ENCODE measurements at regions of chr3 and their contacts with region 1.

Region 1: DNA sequence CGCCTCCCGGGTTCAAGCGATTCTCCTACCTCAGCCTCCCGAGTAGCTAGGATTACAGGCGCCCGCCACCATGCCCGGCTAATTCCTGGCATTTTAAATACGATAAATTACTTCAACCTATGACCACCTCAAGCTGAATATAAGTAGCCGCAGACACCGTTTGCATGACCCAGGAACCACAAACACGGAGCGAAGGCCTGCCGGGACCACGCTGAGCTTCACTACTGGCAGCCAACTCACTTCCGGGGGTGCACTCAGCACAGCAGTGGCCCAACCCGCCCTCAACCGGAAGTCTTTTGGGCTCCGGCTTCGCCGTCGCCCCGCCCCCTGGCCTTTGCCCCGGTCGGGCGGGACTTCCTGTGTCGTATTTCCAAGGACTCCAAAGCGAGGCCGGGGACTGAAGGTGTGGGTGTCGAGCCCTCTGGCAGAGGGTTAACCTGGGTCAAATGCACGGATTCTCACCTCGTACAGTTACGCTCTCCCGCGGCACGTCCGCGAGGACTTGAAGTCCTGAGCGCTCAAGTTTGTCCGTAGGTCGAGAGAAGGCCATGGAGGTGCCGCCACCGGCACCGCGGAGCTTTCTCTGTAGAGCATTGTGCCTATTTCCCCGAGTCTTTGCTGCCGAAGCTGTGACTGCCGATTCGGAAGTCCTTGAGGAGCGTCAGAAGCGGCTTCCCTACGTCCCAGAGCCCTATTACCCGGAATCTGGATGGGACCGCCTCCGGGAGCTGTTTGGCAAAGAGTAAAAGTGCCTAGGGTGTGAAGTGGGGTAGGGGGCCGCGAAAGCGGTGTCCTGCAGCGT is at the start of gene TIMMDC1:
- DNase-seq: peak; percentile 96
- H3K4me3 Mint-ChIP-seq: peak within 1 kb of the TSS; percentile 96
- H3K27ac Mint-ChIP-seq: peak within 1 kb of the TSS; percentile 95
- H3K4me1 Mint-ChIP-seq: peaks cover 32% of the 10 kb centered on the region
- H3K27me3 Mint-ChIP-seq: no peaks in the 10 kb centered on the region
- total RNA-seq, gene TIMMDC1: 93.6 and 101 TPM in 2 replicates

Region 2: GRCh38 chr3:118977671-118978392 is 520.6 kb before region 1 on chr3:
- intact Hi-C with region 1: no loop called
- DNase-seq: no peak
- H3K4me3 Mint-ChIP-seq: no peak overlapping the region
- H3K27ac Mint-ChIP-seq: no peak overlapping the region
- H3K4me1 Mint-ChIP-seq: peaks cover 7% of the 10 kb centered on the region
- H3K27me3 Mint-ChIP-seq: peaks cover 9% of the 10 kb centered on the region

Region 3: GRCh38 chr3:119194237-119195150 is 303.9 kb before region 1 on chr3:
- intact Hi-C with region 1: no loop called
- DNase-seq: no peak
- H3K4me3 Mint-ChIP-seq: no peak overlapping the region
- H3K27ac Mint-ChIP-seq: no peak overlapping the region
- H3K4me1 Mint-ChIP-seq: no peaks in the 10 kb centered on the region
- H3K27me3 Mint-ChIP-seq: peaks cover 5% of the 10 kb centered on the region

Region 4: GRCh38 chr3:119322835-119323722 is 175.3 kb before region 1 on chr3:
- intact Hi-C with region 1: loop called (anchors 1 kb)
- DNase-seq: peak; percentile 87
- H3K4me3 Mint-ChIP-seq: peak overlapping the region; percentile 77
- H3K27ac Mint-ChIP-seq: peak overlapping the region; percentile 83
- H3K4me1 Mint-ChIP-seq: peaks cover 47% of the 10 kb centered on the region
- H3K27me3 Mint-ChIP-seq: peaks cover 2% of the 10 kb centered on the region

Region 5: DNA sequence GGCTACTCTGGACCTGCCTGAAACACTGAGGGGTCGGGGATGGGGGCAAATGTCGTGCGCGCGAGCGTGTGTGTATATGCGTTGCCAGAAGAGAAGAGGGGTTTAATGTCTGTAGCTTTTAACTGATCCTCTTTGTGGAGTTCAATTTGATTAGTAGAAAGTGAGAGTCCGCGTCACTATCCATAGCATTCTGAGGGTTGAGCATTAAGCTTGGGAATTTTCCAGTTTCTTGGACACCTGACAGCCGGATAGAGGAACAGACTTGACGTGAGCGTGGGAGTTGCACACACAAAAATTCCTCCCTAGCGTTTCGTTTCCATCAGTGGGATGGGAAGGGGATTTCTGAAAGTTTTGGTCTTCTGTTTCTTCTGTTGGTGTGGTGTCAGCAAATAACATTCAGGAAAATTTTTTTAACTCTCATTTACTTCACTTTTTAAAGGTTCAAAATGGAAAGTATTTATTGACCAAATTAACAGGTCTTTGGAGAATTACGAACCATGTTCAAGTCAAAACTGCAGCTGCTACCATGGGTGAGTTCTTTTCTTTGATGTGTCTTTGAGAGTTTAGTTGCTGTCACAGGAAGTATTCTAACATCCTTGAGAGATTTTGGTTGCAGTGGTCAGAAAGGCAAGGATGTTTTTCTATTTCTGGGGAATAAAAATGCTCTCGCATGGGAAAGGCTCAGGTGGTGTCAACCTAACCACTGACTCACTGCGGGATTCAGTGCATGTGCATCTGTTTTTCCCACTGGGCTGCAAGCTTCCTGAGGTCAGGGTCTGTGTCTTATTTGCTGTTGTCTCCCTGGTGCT is 28.8 kb before region 1 on chr3:
- intact Hi-C with region 1: loop called (anchors 1 kb)
- DNase-seq: no peak
- H3K4me3 Mint-ChIP-seq: peak overlapping the region; percentile 92
- H3K27ac Mint-ChIP-seq: peak overlapping the region; percentile 88
- H3K4me1 Mint-ChIP-seq: peaks cover 26% of the 10 kb centered on the region
- H3K27me3 Mint-ChIP-seq: no peaks in the 10 kb centered on the region

Region 6: DNA sequence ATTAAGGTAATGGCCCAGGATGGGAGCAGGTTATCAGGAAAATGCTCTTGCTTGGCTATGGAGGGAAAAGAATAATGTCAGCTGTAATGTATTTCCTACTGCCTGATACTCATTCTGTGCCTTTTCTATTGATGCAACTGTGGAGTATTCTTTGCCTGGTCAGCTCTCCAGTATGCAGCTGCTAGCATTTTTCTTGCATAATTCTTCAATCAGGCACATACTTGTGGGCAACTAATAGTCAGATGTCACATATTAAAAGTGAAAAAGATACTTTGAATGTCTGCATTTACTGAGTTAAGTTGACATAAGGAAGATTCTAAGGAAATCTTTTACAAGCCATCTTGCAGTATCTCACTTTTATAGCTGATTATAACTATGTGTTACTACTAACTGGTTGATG is 31.5 kb after region 1 on chr3:
- intact Hi-C with region 1: no loop called
- DNase-seq: no peak
- H3K4me3 Mint-ChIP-seq: no peak overlapping the region
- H3K27ac Mint-ChIP-seq: no peak overlapping the region
- H3K4me1 Mint-ChIP-seq: peaks cover 4% of the 10 kb centered on the region
- H3K27me3 Mint-ChIP-seq: no peaks in the 10 kb centered on the region